GM13976 (cell line): ENCODE measurements at regions of chr3 and their contacts with region 1.

Region 1: GRCh38 chr3:100254168-100254777 is 6.5 kb upstream of the TBC1D23 start:
- DNase-seq: peak; percentile 53
- CTCF ChIP-seq: peak; percentile 75

Region 2: GRCh38 chr3:99836681-99837080 is 417.6 kb before region 1 on chr3:
- in situ Hi-C with region 1: loop called (anchors 5 kb)
- DNase-seq: no peak
- CTCF ChIP-seq: no peak

Region 3: DNA sequence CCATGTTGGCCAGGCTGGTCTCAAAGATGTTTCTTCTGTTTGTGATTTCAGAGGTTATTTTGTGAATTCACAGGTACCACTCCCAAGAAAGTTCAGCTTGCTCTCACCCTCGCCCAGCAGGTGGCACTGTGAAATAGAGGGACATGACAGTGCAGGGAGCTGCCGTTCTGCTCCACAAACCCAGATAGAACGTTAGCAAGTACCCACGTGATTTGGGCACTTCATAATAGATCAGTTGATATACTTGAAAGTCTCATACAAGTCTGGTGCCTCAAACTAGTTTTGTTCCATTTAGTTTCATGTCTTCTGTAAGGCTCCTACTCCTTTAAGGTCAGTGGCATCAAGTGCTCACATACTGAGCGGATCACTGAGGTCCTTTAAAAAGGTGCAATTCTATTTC is 185.4 kb before region 1 on chr3:
- in situ Hi-C with region 1: loop called (anchors 10 kb)
- DNase-seq: peak; percentile 72
- CTCF ChIP-seq: peak; percentile 87

Region 4: DNA sequence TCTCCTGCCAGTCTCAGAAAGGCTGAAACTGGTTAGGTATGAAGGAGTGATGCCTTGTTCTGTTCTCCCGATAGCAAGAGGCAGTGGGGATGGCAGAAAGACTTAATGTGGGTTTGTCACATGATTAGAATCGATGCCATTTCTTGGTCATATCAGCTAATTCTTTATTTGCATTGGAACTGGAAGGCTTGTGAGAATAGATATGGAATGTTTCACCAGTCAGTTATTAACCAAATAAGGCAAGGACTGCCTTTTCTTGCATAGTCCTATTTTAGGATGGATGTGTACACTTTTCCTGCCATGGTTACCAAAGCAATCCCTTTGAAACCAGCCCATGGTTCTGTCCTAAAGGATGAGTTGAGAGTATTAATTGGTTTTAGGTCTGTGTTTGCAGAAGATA is 173.7 kb before region 1 on chr3:
- in situ Hi-C with region 1: no loop called
- DNase-seq: no peak
- CTCF ChIP-seq: no peak